AG04449 (cell line): ENCODE measurements at regions of chr16 and their contacts with region 1.

Region 1: GRCh38 chr16:56269811-56270684 is 78.8 kb downstream of the GNAO1 start:
- DNase-seq: peak; percentile 86
- H3K4me3 ChIP-seq: no peak overlapping the region
- CTCF ChIP-seq: peak; percentile 82

Region 2: DNA sequence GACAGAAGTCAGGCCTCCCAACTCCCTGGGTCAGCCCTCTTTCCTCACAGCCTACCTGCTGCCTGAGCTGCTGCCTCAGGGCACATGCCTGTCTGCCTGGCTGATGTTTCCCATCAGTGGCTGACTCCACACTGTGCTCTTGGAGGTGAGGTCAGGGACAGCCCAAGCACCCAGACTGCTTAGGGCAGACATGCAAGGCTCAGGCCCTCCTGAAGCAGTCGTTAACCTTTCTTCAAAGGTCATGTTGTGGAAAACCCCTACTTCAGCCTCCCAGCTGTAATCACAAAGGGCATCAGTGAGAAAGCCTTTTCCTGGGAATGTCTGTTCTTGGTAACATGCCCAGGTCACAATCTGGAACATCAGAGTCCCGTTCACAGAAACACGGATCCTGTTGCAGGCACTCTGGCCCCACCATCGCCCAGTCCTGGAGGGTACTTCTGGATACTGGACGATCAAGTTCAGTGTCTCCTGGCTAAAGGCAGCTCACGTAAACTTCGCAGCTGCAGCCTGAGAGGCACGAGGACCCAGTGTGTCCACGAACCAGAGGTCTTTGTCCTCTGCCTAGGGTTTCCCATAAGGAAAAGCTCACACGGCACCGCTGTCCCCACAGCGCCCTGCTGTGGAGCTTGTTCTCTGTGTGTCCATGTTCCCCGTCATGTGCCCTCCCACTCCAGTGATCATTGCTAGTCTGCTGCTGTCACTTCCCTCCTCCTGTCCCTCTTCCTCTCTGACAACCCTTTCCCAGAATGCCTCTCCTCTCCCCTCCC is 23.8 kb before region 1 on chr16:
- CTCF ChIA-PET with region 1: interaction called, 13 read pairs
- POLR2A ChIA-PET with region 1: no interaction called
- DNase-seq: peak; percentile 14
- H3K4me3 ChIP-seq: no peak overlapping the region
- CTCF ChIP-seq: no peak

Region 3: GRCh38 chr16:56252835-56253234 is 17.2 kb before region 1 on chr16:
- CTCF ChIA-PET with region 1: interaction called, 13 read pairs
- POLR2A ChIA-PET with region 1: no interaction called
- DNase-seq: no peak
- H3K4me3 ChIP-seq: no peak overlapping the region
- CTCF ChIP-seq: no peak

Region 4: DNA sequence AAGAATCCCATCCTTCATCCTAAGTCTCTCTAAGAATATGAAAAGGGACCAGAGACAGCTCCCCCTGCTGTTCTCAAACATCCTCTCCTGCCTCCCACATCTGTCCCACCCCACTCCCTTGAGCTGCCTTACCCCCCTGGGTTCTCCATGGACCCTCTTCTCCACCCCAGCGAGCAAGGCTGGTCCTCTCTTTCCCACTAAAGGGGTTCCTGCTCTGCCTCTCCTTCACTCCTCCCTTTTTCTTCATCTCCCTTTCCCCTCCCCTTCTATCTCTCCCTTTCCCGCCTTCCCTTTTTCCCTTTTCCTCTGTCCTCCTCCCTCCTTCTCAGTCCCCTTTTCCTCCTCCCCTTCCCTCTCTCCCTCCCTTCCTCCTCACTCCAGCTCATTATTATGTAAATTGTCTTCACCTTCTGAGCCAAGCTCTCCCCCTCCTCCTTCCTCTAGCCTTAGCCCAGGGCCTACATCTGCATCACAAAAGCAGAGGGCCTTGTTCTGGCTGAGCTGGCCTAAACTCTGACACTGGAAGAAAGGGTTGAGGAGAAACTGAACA is 11.3 kb after region 1 on chr16:
- CTCF ChIA-PET with region 1: interaction called, 47 read pairs
- POLR2A ChIA-PET with region 1: no interaction called
- DNase-seq: no peak
- H3K4me3 ChIP-seq: no peak overlapping the region
- CTCF ChIP-seq: peak; percentile 39

Region 5: DNA sequence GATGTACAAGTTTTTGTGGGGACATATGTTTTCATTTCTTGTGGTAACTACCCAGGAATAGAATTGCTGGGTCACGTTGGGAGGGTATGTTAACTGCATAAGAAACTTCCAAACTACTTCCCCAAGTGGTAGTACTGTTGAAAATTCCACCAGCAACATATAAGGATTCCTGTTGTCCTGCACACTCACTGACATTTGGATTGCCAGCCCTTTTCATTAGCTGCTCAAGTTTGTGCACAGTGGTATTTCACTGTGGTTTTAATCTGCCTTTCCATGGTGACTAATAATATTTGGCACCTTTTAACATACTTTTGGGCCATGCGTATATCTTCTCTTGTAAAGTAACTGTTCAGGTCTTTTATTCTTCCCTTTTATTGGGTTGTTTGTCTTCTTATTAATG is 24.5 kb after region 1 on chr16:
- CTCF ChIA-PET with region 1: interaction called, 21 read pairs
- POLR2A ChIA-PET with region 1: interaction called, 5 read pairs
- DNase-seq: peak; percentile 81
- H3K4me3 ChIP-seq: no peak overlapping the region
- CTCF ChIP-seq: no peak